ENCODE measurements at regions of chr19 and their contacts with region 1.

Region 1: DNA sequence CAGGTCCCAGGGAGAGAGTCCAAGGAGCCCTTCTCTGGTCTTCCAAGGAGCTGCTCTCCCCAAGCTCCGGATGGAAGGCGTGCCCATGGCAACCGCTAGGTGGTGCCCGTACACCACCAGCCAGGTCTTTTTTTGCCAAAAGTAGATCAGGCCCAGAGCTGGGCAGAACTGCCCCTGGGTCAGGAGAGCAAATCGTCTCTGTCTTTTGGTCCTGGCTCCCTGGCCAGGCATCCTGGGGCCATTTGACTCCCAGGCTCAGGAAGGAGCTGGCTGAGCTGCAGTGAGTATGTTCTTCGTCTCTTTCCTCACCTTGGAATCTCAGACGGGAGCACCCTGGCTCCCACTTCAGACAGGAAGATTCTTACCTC is 24.6 kb upstream of the BCL3 start:
- H3K4me3 ChIP-seq: no peak overlapping the region
- H3K27ac ChIP-seq: no peak overlapping the region
- H3K4me1 ChIP-seq: peaks cover 3% of the 10 kb centered on the region; the same call in 1 of the 2 replicates
- CTCF ChIP-seq: peak; percentile 90

Region 2: GRCh38 chr19:44570984-44571684 is 152.8 kb before region 1 on chr19:
- CTCF ChIA-PET with region 1: interaction called, 23 read pairs
- POLR2A ChIA-PET with region 1: no interaction called
- H3K4me3 ChIP-seq: no peak overlapping the region
- H3K27ac ChIP-seq: no peak overlapping the region
- H3K4me1 ChIP-seq: no peaks in the 10 kb centered on the region
- CTCF ChIP-seq: no peak

Region 3: DNA sequence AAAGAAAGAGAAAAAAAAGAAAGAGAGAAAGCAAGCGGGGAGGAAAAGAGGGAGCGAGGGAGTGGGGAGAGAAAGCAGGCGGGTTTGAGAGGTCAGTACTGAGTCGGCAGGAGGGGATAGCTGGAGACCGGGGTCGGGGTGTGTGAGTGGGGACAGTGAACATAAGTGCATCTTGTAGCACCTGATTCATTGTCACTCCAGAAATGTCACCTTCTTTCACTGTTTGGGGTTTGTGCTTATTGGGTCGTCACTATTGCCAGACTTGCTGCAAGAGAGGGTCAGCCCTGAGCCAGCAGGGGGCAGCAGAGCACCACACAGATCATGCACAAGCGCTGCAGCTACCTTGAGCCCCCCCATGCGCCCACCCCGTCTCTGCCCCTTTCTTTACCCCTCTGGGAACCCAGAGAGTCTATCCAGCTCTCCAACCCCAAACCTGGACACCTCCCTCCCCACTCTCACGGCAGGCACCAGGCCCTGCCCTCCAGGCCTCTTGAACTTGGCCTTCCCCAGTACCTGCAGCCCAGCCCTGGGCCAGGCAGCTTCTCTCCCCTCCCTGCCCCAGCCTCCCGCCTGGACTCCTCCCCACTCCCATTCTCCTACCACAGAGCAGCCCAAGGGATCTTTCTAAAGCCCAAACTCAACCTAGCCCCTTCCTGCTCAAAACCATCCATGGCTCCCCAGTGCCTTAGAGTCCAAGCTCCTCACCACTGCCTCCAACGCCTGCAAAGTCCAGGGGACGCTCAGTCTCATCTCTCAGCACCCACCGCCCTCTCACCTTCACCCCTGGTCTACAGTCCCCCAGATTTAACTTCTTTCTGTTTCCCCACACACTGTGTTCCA is 34.7 kb before region 1 on chr19:
- CTCF ChIA-PET with region 1: interaction called, 79 read pairs
- POLR2A ChIA-PET with region 1: interaction called, 5 read pairs
- H3K4me3 ChIP-seq: no peak overlapping the region
- H3K27ac ChIP-seq: no peak overlapping the region
- H3K4me1 ChIP-seq: 0 out of 2 replicates have a peak, but pooled peaks cover 3% of the 10 kb centered on the region
- CTCF ChIP-seq: peak; percentile 93

Region 4: GRCh38 chr19:44741841-44742352 is 18.0 kb after region 1 on chr19:
- CTCF ChIA-PET with region 1: interaction called, 20 read pairs
- POLR2A ChIA-PET with region 1: no interaction called
- H3K4me3 ChIP-seq: no peak overlapping the region
- H3K27ac ChIP-seq: peak overlapping the region; percentile 74
- H3K4me1 ChIP-seq: peaks cover 4% of the 10 kb centered on the region
- CTCF ChIP-seq: no peak

Region 5: DNA sequence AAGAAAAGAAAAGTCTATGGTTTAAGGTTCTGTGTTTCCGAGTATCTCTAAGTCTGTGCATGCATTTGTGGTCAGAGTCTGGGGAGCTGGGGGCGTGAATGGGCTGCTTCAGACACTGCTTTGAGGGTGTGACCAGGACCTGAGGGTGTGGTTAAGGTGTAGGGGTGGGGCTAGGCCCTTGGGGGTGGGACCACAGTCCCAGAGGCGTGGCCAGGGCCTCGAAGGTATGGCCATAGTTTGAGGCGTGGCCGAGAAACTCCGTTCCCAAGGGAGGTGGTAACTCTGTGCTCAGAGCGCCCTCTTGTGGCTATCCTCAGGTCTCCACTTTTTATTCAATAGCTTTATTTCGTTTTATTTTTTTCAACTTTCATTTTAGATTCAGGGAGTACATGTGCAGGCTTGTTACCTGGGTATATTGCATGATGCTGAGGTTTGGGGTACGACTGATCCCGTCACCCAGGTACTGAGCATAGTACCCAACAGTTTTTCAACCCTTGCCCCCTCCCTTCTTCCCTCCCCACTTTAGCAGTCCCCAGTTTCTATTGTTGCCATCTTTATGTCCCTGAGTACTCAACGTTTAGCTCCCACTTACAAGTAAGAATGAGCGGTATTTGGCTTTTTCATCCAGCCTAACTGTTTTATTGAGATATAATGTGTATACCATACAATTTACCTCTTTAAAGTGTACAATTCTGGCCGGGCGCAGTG is 46.8 kb after region 1 on chr19:
- CTCF ChIA-PET with region 1: interaction called, 453 read pairs
- POLR2A ChIA-PET with region 1: interaction called, 34 read pairs
- H3K4me3 ChIP-seq: no peak overlapping the region
- H3K27ac ChIP-seq: no peak overlapping the region
- H3K4me1 ChIP-seq: 0 out of 2 replicates have a peak, but pooled peaks cover 4% of the 10 kb centered on the region
- CTCF ChIP-seq: peak; percentile 77

Region 6: DNA sequence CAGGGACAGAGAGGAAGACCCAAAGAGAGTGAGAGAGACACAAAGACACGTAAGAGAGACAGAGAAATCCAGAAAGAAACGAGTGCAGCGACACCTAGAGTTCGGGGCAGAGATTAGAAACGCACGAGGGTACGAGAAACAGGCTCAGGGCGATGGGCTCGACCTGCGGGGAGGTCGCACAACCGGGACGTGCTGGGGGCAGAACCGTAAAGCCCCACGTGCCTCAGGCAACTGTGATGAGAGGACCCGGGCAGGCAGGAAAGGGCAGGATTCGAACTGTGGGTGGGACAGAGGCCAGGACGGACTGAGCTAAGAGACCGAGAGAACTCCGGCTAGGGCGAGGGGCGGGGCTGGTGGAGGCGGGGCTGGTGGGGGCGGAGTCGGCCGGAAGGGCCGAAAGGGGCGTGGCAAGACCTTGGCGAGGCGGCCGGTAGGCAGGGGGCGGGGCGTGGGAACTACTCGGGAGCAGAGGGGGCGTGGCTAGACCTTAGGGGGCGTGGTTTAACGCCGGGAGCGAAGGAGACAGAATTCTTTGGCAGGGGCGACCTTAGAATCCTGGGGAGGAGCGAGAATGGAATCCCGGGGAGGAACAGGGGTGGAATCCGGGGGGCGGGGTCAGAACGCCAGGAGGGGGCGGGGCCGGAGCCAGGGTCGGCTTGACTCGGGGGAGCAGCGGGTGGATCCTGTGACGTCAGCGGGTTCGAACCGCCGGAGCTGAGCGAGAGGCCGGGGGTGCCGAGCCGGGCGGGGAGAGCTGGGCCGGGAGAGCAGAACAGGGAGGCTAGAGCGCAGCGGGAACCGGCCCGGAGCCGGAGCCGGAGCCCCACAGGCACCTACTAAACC is 121.9 kb after region 1 on chr19 and contains the start of gene NECTIN2:
- CTCF ChIA-PET with region 1: interaction called, 35 read pairs
- POLR2A ChIA-PET with region 1: no interaction called
- H3K4me3 ChIP-seq: peak within 1 kb of the TSS; percentile 85
- H3K27ac ChIP-seq: peak within 1 kb of the TSS; percentile 93
- H3K4me1 ChIP-seq: peaks cover 25% of the 10 kb centered on the region
- CTCF ChIP-seq: peak; percentile 99